Mammary epithelial cell (primary cell): ENCODE measurements at regions of chr11 and their contacts with region 1.

Region 1: DNA sequence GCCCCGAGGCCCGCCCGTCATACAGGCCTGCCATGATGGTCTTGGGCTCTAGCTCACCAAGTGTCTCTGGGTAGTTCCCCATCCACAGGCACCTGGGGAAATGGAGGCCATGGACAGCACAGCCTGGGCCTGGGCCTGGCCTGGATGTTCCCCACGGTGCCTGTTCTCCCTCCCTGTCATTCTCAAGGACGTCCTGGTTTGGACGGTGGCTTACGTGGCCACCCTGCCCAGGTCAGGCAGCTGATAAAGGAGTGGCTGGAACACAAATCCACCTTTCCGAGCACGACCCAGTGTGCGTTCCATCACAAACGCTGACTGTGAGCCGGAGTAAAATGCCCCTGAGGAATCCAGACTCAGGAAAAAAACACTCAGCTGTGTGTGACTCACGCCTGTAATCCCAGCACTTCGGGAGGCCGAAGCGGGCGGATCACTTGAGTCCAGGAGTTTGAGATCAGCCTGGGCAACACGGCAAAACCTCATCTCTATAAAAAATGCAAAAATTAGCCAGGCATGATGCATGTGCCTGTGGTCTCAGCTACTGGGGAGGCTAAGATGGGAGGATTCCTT is 41.2 kb upstream of the TESMIN start:
- DNase-seq: no peak
- H3K4me3 ChIP-seq: no peak overlapping the region
- H3K27ac ChIP-seq: no peak overlapping the region
- H3K4me1 ChIP-seq: no peaks in the 10 kb centered on the region
- H3K27me3 ChIP-seq: no peaks in the 10 kb centered on the region
- CTCF ChIP-seq: no peak

Region 2: DNA sequence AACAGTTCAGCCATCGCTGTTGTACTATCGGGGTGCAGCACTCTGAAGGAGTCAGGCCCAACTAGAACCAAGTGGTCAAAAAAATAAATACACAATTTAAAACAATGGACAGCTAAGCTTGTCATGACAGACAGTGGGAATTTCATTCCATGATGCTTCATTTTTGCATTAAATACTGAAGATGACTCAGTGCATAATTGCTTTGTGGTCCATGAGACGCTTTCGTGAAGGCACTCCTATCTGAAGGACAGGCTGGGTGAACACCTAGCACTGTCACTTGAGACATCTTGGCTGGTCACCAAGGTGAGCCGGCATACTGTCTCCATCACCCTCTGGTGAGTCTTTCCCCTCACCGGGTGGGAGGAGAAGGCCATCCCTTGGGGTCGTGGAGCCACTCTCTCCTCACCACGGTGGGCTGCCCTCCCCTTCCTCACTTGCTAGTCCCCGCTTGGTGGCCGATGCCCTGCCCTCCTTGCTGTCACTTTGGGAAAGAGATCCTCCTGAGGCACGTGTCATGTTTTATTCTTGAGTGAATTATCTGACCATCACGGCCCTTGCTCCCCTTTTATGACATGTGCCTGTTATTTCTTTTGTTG is 36.2 kb before region 1 on chr11:
- CTCF ChIA-PET with region 1: no interaction called
- dilution Hi-C with region 1: loop called (anchors 5 kb)
- in situ Hi-C with region 1: no loop called
- intact Hi-C with region 1: no loop called
- DNase-seq: peak; percentile 21
- H3K4me3 ChIP-seq: no peak overlapping the region
- H3K27ac ChIP-seq: no peak overlapping the region
- H3K4me1 ChIP-seq: no peaks in the 10 kb centered on the region
- H3K27me3 ChIP-seq: no peaks in the 10 kb centered on the region
- CTCF ChIP-seq: no peak